Activated CD4-positive, alpha-beta T cell treated with anti-CD3 and anti-CD28 coated beads, Interleukin-2, amount 10 ng/mL, durations not matched to agents 24 days and 14 days (primary cell): ENCODE measurements at regions of chr20 and their contacts with region 1.

Region 1: DNA sequence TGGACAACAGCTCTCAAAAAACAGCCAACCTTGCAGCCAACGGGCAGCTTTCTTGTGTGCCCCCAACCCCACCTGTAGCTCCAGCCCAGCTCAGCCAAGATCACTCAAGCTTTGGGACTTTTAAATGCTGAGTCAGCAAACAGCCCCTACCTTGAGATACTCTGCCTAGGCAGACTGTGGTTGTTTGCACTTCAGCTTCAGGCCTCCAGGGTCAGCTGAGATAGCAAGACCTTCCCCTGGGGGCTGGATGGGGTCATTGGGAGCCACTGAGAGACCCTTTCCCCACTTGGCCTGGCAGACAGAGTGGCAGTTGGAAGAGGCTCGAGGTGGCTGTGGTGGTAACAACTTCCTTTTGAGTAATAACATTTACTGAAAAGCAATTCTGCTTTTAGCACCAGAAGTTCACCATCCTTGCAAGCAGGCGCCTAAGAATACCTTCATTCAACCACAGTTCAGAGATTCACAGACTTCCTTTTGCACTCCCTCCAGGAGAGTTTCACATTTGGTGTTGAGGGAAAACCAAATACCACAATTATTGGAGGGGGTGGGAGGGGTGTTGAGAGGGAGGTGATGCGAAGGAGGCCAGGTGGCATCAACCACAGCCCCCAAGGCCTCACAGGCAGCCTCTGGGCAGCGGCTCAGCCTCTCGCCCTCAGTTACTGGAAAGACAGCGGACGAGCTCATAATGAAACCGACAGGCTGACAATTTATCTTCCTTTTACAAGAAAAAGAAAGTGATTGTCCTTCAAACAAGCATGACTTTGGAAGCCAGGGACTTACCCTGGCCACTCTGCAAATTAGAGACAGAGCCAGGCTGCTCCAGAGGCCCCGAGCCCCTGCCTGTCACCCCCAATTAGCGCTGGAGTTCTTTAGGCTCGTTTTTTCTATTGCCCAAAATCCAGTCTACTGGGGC is 148.1 kb downstream of the CEBPB start:
- DNase-seq: peak; percentile 92
- H3K4me3 Mint-ChIP-seq: peak overlapping the region; percentile 78
- H3K27ac Mint-ChIP-seq: peak overlapping the region; percentile 96
- H3K4me1 Mint-ChIP-seq: peaks cover 61% of the 10 kb centered on the region
- H3K27me3 Mint-ChIP-seq: peaks cover 2% of the 10 kb centered on the region

Region 2: GRCh38 chr20:50189681-50190582 is 148.8 kb before region 1 on chr20:
- intact Hi-C with region 1: loop called (anchors 1 kb)
- DNase-seq: peak; percentile 96
- H3K4me3 Mint-ChIP-seq: peak overlapping the region; percentile 55
- H3K27ac Mint-ChIP-seq: peak overlapping the region; percentile 41
- H3K4me1 Mint-ChIP-seq: peaks cover 30% of the 10 kb centered on the region
- H3K27me3 Mint-ChIP-seq: peaks cover 11% of the 10 kb centered on the region

Region 3: GRCh38 chr20:50286609-50287008 is 52.1 kb before region 1 on chr20:
- intact Hi-C with region 1: loop called (anchors 1 kb)
- DNase-seq: no peak
- H3K4me3 Mint-ChIP-seq: no peak overlapping the region
- H3K27ac Mint-ChIP-seq: peak overlapping the region; percentile 93
- H3K4me1 Mint-ChIP-seq: peaks cover 29% of the 10 kb centered on the region
- H3K27me3 Mint-ChIP-seq: peaks cover 3% of the 10 kb centered on the region

Region 4: DNA sequence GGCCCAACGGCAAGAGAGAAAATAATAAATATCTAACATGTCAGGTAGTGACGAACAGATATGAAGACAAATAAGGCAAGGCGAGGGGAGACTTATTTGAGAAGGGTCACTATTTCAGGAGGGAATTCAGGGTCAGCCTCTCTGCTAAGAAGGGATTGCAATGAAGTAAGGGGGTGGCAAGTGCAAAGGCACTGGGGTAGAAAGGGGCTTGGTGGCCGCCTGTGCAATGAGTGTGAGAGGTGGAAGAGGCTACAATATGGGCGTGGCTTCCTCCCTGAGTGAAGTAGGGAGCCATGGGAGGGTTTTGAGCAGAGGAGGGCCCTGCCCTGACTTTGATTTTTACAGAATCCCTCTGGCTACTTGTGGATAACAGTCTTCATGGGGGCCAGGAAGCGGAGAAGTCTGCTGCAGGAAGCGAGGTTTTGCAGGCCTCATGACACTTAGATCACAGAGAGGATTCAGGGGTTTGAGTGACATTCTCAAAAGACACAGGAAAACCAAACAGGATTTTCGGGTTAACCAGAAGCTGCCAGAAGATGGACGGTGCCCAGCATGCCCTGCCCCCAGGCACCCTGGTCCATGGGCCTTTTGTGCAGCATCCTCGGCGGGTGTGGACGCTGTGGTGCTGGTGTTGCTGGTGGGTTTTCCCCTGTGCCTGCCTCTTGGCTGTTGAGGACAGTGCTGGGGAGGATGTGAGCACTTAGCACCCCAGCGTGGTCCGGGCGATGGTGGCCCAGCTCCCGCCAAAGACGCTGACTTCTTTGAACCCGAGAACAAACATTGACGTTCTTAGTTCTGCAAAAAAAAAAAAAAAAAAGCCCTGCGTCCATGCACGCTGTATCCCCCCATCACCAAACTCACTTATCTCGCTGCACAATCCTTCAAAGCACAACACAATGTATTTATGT is 47.3 kb after region 1 on chr20:
- intact Hi-C with region 1: loop called (anchors 5 kb)
- DNase-seq: peak; percentile 93
- H3K4me3 Mint-ChIP-seq: peak overlapping the region; percentile 60
- H3K27ac Mint-ChIP-seq: peak overlapping the region; percentile 69
- H3K4me1 Mint-ChIP-seq: peaks cover 71% of the 10 kb centered on the region
- H3K27me3 Mint-ChIP-seq: no peaks in the 10 kb centered on the region

Region 5: DNA sequence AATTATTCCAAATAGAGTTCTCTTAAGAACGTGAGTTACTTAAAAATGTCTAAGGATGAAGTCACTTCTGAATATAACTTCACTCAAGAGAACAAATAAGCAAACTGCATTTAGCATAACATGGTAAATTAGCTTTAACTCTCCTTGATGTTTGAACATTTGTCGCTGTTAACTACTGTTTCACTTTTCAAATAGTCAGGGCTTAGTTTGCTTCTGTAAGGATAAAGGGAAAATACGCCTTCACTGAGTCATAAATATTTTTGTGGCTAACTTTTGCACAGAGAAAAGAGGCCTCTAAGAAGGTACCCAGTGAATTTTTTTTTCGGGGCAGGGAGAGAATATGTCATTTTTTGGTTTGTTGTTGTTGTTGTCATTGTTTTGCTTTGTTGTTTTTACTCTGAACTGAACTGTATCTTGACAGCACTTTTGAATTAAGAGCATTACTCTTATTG is 179.6 kb after region 1 on chr20:
- intact Hi-C with region 1: loop called (anchors 2 kb)
- DNase-seq: peak; percentile 74
- H3K4me3 Mint-ChIP-seq: peak overlapping the region; percentile 85
- H3K27ac Mint-ChIP-seq: peak overlapping the region; percentile 94
- H3K4me1 Mint-ChIP-seq: peaks cover 76% of the 10 kb centered on the region
- H3K27me3 Mint-ChIP-seq: no peaks in the 10 kb centered on the region

Region 6: DNA sequence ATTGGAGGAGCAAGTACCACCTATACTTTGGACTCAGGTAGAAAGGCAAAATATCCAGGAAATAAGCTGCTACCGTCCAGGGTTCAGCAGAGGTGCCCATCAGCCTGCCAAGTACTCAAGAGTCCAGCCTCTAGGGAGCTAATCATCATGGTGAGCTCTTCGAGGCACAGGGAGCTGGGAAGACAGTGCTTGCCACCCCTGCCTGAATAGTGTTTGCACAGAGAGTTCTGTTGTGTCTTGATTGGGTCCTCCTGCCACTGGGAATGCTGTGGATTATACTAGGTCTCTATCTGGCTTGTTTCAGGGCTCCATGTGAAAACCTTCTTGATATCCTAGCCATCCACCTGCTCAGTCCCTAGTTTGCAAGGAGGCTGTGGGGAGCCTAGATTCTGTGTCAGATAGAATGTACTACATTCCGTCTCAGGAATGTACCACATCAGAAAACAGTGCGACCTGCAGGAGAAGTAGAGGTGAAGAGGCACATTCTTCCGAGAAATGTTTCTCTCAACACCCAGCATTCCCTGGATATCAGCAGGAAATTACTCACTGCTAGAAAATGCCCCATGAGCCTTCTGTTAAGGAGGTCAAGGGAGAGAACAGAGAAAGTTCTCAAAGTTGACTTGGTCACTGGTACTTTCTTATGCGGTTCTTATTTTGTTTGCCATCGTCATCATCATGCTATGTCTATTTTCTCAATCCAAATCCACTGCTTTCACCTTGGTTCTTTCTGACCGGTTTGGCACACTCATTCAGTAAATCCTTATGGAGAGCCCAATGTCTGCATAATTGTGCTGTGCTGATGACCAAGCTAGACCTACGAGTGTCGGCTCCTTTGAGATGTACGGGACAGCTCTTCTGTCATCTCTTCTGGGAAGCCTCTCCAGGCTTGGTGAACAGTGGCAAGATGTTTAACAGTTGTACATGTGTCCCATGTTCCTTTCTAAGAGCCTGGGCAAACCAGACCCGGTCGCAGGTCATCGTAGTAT is 202.2 kb after region 1 on chr20:
- intact Hi-C with region 1: loop called (anchors 10 kb)
- DNase-seq: no peak
- H3K4me3 Mint-ChIP-seq: peak overlapping the region; percentile 26
- H3K27ac Mint-ChIP-seq: peak overlapping the region; percentile 58
- H3K4me1 Mint-ChIP-seq: peaks cover 57% of the 10 kb centered on the region
- H3K27me3 Mint-ChIP-seq: no peaks in the 10 kb centered on the region

Region 7: DNA sequence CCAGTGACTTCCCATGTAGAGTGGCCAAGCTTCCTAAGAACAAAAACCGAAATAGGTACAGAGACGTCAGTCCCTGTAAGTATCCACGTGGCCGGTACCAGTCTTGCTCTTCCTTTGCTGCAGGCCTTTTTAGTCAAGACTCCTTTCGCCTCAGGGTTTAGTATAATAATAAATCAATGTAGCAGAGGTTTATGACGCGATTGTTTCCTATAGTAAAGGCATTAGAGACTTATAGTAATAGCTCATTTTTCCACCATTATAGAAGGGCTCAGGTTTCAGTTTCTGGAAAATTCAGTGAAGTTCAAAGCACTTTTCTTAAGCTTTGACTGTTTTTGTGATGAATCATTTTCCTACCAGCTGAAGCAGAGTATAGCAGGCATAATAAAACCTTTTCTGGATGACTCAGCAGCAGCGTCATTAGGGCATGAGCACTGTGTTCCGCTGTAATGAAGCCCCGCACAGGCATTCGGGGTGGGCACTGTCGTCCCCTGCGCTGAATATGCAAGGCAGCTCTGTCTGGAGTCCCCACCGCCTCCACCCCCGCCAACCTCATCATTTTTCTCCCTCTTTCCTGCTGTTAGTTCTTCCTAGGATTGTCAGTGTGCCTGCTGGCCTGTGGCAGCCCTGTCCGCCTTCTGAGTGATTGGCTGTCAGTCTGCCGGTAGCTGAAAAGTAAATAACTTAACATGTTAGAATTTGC is 222.8 kb after region 1 on chr20:
- intact Hi-C with region 1: loop called (anchors 5 kb)
- DNase-seq: peak; percentile 79
- H3K4me3 Mint-ChIP-seq: peak overlapping the region; percentile 78
- H3K27ac Mint-ChIP-seq: peak overlapping the region; percentile 94
- H3K4me1 Mint-ChIP-seq: peaks cover 62% of the 10 kb centered on the region
- H3K27me3 Mint-ChIP-seq: no peaks in the 10 kb centered on the region